CD4-positive, alpha-beta memory T cell (primary cell): ENCODE measurements at regions of chr2 and their contacts with region 1.

Region 1: GRCh38 chr2:110677530-110678456 is at the start of gene BUB1:
- DNase-seq: peak; percentile 95
- H3K4me3 ChIP-seq: peak within 1 kb of the TSS; percentile 98
- H3K4me3 Mint-ChIP-seq: peak within 1 kb of the TSS; percentile 96 to 100 (median 98)
- H3K27ac ChIP-seq: peak within 1 kb of the TSS; percentile 72
- H3K27ac Mint-ChIP-seq: peak within 1 kb of the TSS; percentile 87 to 98 (median 95)
- H3K4me1 ChIP-seq: peaks cover 27% of the 10 kb centered on the region
- H3K4me1 Mint-ChIP-seq: peaks cover 15 to 40% (median 23%) of the 10 kb centered on the region in 4 donors
- H3K27me3 ChIP-seq: no peaks in the 10 kb centered on the region
- H3K27me3 Mint-ChIP-seq: no peaks in the 10 kb centered on the region
- total RNA-seq, gene BUB1: 1.7 to 2.9 TPM

Region 2: DNA sequence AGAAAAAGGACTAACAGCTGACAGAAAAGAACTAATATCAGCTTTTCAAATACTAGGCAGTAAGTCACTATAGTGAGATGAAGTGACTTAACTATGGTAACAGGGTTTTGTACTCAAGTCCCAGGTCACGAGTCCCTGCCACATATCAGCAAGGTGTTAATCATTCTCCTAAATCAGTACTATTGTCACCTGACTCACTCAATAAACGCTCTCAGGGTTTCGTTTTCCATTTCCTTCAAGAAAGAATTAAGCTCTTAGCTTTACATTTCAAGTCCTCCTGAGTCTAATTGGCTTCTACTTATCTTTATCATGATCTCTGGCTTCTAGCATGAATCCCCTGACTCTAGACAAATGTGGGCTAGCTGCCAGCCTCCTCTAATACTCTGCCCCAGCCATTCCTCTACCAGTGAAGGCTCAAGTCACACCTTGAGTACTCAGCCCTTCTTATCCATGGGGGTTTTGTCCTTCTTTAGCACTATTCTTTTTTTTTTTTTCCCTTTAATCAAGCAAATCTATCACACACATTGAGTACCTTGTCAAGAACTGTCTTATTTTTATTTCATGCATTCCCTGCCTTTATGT is 20.0 kb before region 1 on chr2:
- CTCF ChIA-PET with region 1: interaction called, 3 read pairs
- POLR2A ChIA-PET with region 1: interaction called, 10 read pairs
- intact Hi-C with region 1: loop called (anchors 1 kb)
- DNase-seq: peak in 4 of 5 donors; percentile 9 to 30 (median 14)
- H3K4me3 ChIP-seq: no peak overlapping the region
- H3K4me3 Mint-ChIP-seq: peak overlapping the region; percentile 10 to 74 (median 64)
- H3K27ac ChIP-seq: peak overlapping the region; percentile 1
- H3K27ac Mint-ChIP-seq: peak overlapping the region; percentile 23 to 88 (median 72)
- H3K4me1 ChIP-seq: peaks cover 16% of the 10 kb centered on the region
- H3K4me1 Mint-ChIP-seq: peaks cover 7 to 15% (median 14%) of the 10 kb centered on the region in 4 donors
- H3K27me3 ChIP-seq: no peaks in the 10 kb centered on the region
- H3K27me3 Mint-ChIP-seq: no peaks in the 10 kb centered on the region

Region 3: DNA sequence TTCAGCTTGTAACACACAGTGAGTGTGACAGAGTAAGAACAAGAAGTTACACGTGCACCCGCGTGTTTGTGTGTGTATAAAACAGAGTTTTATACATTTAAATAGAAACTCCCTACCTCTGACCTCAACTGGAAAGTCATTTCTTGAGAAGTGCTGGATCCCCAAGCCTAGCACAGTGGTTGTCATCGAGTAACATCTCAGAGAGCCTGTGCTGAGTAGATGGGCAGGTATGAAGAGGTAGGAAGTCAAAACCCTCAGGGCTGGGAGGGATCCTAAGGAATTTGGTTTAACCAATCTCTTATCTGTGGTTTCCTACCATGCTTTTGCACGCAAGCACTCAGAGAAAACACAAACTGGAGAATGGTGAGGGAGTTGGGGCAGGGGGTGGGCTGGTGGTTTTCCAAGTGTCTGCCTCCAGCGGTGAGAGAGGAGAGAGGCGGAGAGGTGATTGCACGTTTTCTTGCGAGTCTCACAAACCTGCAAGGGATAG is 63.7 kb after region 1 on chr2:
- CTCF ChIA-PET with region 1: no interaction called
- POLR2A ChIA-PET with region 1: no interaction called
- intact Hi-C with region 1: no loop called
- DNase-seq: no peak
- H3K4me3 ChIP-seq: no peak overlapping the region
- H3K4me3 Mint-ChIP-seq: no peak overlapping the region
- H3K27ac ChIP-seq: no peak overlapping the region
- H3K27ac Mint-ChIP-seq: peak overlapping the region in 1 of 7 donors; percentile 13
- H3K4me1 ChIP-seq: no peaks in the 10 kb centered on the region
- H3K4me1 Mint-ChIP-seq: no peaks in the 10 kb centered on the region
- H3K27me3 ChIP-seq: peaks cover 6% of the 10 kb centered on the region
- H3K27me3 Mint-ChIP-seq: peaks cover 44 to 50% of the 10 kb centered on the region in 2 donors